CD4-positive, alpha-beta memory T cell (primary cell): ENCODE measurements at regions of chr19 and their contacts with region 1.

Region 1: GRCh38 chr19:16185123-16185767 is at the start of gene FAM32A:
- DNase-seq: peak; percentile 98 to 99 (median 99)
- H3K4me3 ChIP-seq: peak within 1 kb of the TSS; percentile 84 to 86
- H3K4me3 Mint-ChIP-seq: peak within 1 kb of the TSS; percentile 97 to 100 (median 99)
- H3K27ac ChIP-seq: peak within 1 kb of the TSS; percentile 83
- H3K27ac Mint-ChIP-seq: peak within 1 kb of the TSS; percentile 95 to 99 (median 96)
- H3K4me1 ChIP-seq: peaks cover 43% of the 10 kb centered on the region
- H3K4me1 Mint-ChIP-seq: peaks cover 20 to 43% (median 31%) of the 10 kb centered on the region in 4 donors
- H3K27me3 ChIP-seq: no peaks in the 10 kb centered on the region
- H3K27me3 Mint-ChIP-seq: peaks cover 0 to 2% of the 10 kb centered on the region in 2 donors
- total RNA-seq, gene FAM32A: 50.9 to 51.7 TPM

Region 2: DNA sequence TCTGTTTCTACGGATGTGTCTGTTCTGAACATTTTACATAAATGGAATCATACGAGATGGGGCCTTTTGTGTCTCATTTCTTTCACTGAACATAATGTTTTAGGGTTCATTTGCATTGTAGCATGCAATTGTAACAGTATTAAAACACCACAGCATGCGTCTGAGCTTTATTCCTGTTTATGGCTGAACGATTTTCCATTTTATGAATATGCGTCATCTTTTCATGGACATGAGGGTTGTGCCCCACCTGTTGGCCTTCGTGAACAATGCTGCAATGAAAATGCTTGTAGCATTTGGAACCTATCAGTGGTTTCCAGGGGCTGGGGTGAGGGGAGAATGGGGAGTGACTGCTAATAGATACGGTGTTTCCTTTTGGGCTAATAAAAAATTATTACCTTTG is 374.9 kb before region 1 on chr19:
- CTCF ChIA-PET with region 1: interaction called, 3 read pairs
- POLR2A ChIA-PET with region 1: no interaction called
- intact Hi-C with region 1: loop called (anchors 2 kb)
- DNase-seq: no peak
- H3K4me3 ChIP-seq: no peak overlapping the region
- H3K4me3 Mint-ChIP-seq: no peak overlapping the region
- H3K27ac ChIP-seq: no peak overlapping the region
- H3K27ac Mint-ChIP-seq: no peak overlapping the region
- H3K4me1 ChIP-seq: peaks cover 11% of the 10 kb centered on the region
- H3K4me1 Mint-ChIP-seq: peaks cover 6 to 24% (median 14%) of the 10 kb centered on the region in 4 donors
- H3K27me3 ChIP-seq: no peaks in the 10 kb centered on the region
- H3K27me3 Mint-ChIP-seq: peaks cover 8 to 22% of the 10 kb centered on the region in 2 donors

Region 3: GRCh38 chr19:15995536-15995935 is 189.7 kb before region 1 on chr19:
- CTCF ChIA-PET with region 1: no interaction called
- POLR2A ChIA-PET with region 1: no interaction called
- intact Hi-C with region 1: loop called (anchors 1 kb)
- DNase-seq: no peak
- H3K4me3 ChIP-seq: no peak overlapping the region
- H3K4me3 Mint-ChIP-seq: no peak overlapping the region
- H3K27ac ChIP-seq: no peak overlapping the region
- H3K27ac Mint-ChIP-seq: no peak overlapping the region
- H3K4me1 ChIP-seq: no peaks in the 10 kb centered on the region
- H3K4me1 Mint-ChIP-seq: peaks cover 0 to 2% (median under 1%) of the 10 kb centered on the region in 4 donors
- H3K27me3 ChIP-seq: peaks cover 6% of the 10 kb centered on the region
- H3K27me3 Mint-ChIP-seq: peaks cover 10 to 15% of the 10 kb centered on the region in 2 donors

Region 4: GRCh38 chr19:16070366-16070990 is 114.8 kb before region 1 on chr19:
- CTCF ChIA-PET with region 1: interaction called, 38 read pairs
- POLR2A ChIA-PET with region 1: interaction called, 15 read pairs
- intact Hi-C with region 1: loop called (anchors 1 kb)
- DNase-seq: peak; percentile 87 to 98 (median 94)
- H3K4me3 ChIP-seq: peak overlapping the region in 1 of 2 donors; percentile 46
- H3K4me3 Mint-ChIP-seq: peak overlapping the region in 3 of 8 donors; percentile 60 to 80 (median 77)
- H3K27ac ChIP-seq: peak overlapping the region; percentile 89
- H3K27ac Mint-ChIP-seq: no peak overlapping the region
- H3K4me1 ChIP-seq: peaks cover 78% of the 10 kb centered on the region
- H3K4me1 Mint-ChIP-seq: peaks cover 25 to 46% (median 38%) of the 10 kb centered on the region in 4 donors
- H3K27me3 ChIP-seq: no peaks in the 10 kb centered on the region
- H3K27me3 Mint-ChIP-seq: no peaks in the 10 kb centered on the region

Region 5: DNA sequence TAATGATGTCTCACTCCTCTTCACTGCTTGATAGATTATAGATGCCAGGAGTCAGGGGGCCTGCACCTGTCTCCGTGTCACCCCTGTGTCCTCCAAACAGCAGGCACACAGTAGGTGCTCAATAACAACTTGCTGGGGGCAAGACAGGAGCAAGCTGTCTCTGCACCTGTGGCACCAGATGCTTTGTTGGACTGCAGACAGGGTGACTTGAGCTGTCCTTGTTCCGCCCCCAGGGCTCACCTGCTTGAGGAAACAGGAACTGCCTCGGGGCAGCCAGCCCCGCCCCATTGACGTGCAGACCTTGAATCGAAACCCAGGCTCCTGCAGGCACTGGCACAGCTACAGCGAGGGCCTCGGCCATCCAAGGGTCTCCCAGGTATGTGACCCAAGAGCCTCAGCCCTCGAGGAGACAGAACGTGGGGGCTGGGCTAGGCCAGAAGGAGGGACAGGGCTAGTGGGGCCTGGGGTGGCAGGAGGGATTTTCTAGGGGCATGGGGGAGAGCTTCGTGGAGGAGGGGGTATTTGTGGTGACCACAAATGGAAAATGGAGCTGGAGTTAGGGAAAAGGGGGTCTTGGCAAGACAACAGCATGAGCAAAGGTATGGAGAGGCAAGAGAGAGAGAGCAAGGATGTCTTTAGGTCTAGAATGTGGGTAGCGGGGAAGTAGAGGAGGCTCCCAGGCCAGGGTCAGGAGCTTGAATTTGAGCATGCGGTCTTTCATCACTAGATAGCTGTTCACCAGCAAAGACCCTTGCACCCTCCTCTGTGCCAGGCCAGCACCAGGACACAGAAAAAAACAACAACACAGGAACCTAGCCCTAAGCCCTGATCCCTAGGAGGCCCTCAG is 41.6 kb before region 1 on chr19 and contains the start of gene HSH2D:
- CTCF ChIA-PET with region 1: interaction called, 7 read pairs
- POLR2A ChIA-PET with region 1: no interaction called
- intact Hi-C with region 1: loop called (anchors 1 kb)
- DNase-seq: peak; percentile 76 to 87 (median 79)
- H3K4me3 ChIP-seq: peak within 1 kb of the TSS; percentile 74 to 84
- H3K4me3 Mint-ChIP-seq: peak within 1 kb of the TSS; percentile 91 to 97 (median 95)
- H3K27ac ChIP-seq: peak within 1 kb of the TSS; percentile 82
- H3K27ac Mint-ChIP-seq: peak within 1 kb of the TSS; percentile 83 to 99 (median 96)
- H3K4me1 ChIP-seq: peaks cover 42% of the 10 kb centered on the region
- H3K4me1 Mint-ChIP-seq: peaks cover 20 to 51% (median 33%) of the 10 kb centered on the region in 4 donors
- H3K27me3 ChIP-seq: no peaks in the 10 kb centered on the region
- H3K27me3 Mint-ChIP-seq: no peaks in the 10 kb centered on the region
- total RNA-seq, gene HSH2D: 17.8 to 18.8 TPM

Region 6: DNA sequence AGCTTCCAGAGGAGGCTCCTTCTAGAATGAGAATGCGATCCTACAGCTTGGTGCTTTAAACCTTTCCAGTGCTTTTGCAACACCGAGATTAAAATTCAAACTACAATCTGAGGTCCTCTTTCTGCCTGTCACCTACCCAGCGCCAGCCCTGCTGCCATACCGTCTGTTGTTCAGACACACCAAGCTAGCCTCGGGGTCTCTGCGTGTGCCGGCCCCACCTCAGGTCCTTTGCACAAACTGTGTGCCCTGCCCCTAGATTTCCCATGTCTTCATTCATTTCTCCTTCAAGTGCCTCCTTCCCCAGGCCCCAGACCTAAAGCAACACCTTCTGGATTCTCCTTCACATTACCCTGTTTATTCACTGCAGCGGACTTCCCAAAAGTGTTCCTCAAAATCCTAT is 30.7 kb before region 1 on chr19:
- CTCF ChIA-PET with region 1: no interaction called
- POLR2A ChIA-PET with region 1: no interaction called
- intact Hi-C with region 1: no loop called
- DNase-seq: no peak
- H3K4me3 ChIP-seq: no peak overlapping the region
- H3K4me3 Mint-ChIP-seq: no peak overlapping the region
- H3K27ac ChIP-seq: no peak overlapping the region
- H3K27ac Mint-ChIP-seq: peak overlapping the region in 6 of 7 donors; percentile 0 to 75 (median 18)
- H3K4me1 ChIP-seq: no peaks in the 10 kb centered on the region
- H3K4me1 Mint-ChIP-seq: peaks cover 0 to 4% (median 0%) of the 10 kb centered on the region in 4 donors
- H3K27me3 ChIP-seq: no peaks in the 10 kb centered on the region
- H3K27me3 Mint-ChIP-seq: no peaks in the 10 kb centered on the region

Region 7: GRCh38 chr19:16293118-16294091 is 108.2 kb after region 1 on chr19:
- CTCF ChIA-PET with region 1: no interaction called
- POLR2A ChIA-PET with region 1: no interaction called
- intact Hi-C with region 1: no loop called
- DNase-seq: no peak
- H3K4me3 ChIP-seq: no peak overlapping the region
- H3K4me3 Mint-ChIP-seq: no peak overlapping the region
- H3K27ac ChIP-seq: no peak overlapping the region
- H3K27ac Mint-ChIP-seq: peak overlapping the region in 3 of 7 donors; percentile 15 to 59 (median 19)
- H3K4me1 ChIP-seq: peaks cover 3% of the 10 kb centered on the region
- H3K4me1 Mint-ChIP-seq: peaks cover 0 to 12% (median 6%) of the 10 kb centered on the region in 4 donors
- H3K27me3 ChIP-seq: no peaks in the 10 kb centered on the region
- H3K27me3 Mint-ChIP-seq: no peaks in the 10 kb centered on the region

Region 8: DNA sequence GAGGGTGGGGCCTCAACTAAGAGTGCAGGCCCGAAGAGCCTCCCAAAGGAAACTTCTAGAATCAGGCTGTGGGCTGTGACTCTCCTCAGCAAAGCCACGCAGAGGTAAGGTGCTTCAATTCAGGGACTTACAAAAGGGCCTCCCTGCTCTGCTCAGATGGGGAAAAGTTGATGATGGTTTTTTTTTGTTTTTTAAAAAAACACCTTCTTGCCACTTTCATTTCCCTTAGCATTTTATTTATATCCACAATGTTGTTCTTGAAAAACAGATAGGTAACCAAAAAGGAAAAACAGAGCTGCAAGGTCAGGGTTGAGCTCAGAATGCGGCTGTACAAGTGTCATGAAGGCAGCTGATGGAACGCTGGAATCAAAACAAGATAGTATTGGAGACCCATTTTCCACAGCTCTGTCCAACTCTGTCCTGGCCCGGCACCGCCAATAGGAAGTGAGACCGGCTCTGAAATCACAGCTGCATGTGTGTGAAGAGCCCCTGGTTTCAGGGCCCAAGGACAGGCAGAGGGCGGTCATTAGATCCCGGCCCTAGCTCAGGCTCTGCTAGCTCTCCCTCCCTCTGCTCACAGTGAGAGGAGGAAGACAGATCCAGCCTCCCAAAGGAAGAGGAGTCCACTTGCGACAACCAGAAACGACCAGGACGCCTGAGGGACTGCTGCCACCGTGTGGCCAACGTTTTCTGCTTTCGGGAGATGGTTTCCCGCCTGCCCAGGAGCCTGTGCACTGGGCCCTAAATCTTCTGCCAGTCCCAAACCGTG is 197.7 kb after region 1 on chr19:
- CTCF ChIA-PET with region 1: interaction called, 19 read pairs
- POLR2A ChIA-PET with region 1: interaction called, 8 read pairs
- intact Hi-C with region 1: no loop called
- DNase-seq: peak; percentile 72 to 80 (median 77)
- H3K4me3 ChIP-seq: peak overlapping the region in 1 of 2 donors; percentile 50
- H3K4me3 Mint-ChIP-seq: peak overlapping the region; percentile 63 to 85 (median 77)
- H3K27ac ChIP-seq: peak overlapping the region; percentile 66
- H3K27ac Mint-ChIP-seq: peak overlapping the region; percentile 93 to 97 (median 96)
- H3K4me1 ChIP-seq: peaks cover 69% of the 10 kb centered on the region
- H3K4me1 Mint-ChIP-seq: peaks cover 35 to 76% (median 60%) of the 10 kb centered on the region in 4 donors
- H3K27me3 ChIP-seq: no peaks in the 10 kb centered on the region
- H3K27me3 Mint-ChIP-seq: no peaks in the 10 kb centered on the region